CD4-positive, alpha-beta memory T cell (primary cell): ENCODE measurements at regions of chr17 and their contacts with region 1.

Region 1: DNA sequence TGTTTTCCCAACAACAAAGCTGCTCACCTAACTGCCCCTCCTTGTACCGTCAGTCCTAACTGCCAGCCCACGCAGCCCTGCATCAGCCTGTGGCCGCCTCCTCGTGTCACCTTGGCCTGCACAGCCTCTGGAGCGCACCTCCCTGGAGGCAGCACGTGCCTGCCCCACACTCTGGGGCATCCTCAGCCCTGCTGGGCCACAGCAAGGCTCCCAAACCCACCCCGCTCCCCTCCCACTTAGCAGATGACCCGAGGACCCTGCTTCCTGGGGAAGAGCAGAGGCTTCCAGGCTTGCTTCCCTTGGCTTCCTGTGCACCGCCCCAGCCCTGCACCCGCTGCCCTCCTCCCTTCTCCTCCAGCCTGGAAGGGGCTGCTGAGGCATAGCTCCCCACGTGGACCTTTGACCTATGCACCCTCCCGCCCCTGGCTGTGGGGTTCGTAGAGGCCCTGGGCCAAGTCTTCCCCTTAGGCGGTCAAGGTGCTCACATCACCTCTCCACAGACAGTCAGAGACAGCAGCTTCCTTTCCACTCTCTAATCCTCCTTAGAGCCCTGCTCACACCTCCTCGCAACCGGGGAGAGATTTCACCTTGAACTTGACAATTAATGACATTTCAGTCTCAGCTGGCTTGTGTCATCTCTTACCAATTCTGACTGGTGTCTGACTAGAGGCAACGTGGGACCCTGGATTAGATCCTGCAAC is 115.0 kb downstream of the MGAT5B start:
- DNase-seq: no peak
- H3K4me3 ChIP-seq: no peak overlapping the region
- H3K4me3 Mint-ChIP-seq: peak overlapping the region in 7 of 8 donors; percentile 21 to 77 (median 64)
- H3K27ac ChIP-seq: peak overlapping the region; percentile 44
- H3K27ac Mint-ChIP-seq: peak overlapping the region; percentile 64 to 95 (median 91)
- H3K4me1 ChIP-seq: peaks cover 27% of the 10 kb centered on the region
- H3K4me1 Mint-ChIP-seq: peaks cover 11 to 41% (median 19%) of the 10 kb centered on the region in 4 donors
- H3K27me3 ChIP-seq: no peaks in the 10 kb centered on the region
- H3K27me3 Mint-ChIP-seq: no peaks in the 10 kb centered on the region

Region 2: DNA sequence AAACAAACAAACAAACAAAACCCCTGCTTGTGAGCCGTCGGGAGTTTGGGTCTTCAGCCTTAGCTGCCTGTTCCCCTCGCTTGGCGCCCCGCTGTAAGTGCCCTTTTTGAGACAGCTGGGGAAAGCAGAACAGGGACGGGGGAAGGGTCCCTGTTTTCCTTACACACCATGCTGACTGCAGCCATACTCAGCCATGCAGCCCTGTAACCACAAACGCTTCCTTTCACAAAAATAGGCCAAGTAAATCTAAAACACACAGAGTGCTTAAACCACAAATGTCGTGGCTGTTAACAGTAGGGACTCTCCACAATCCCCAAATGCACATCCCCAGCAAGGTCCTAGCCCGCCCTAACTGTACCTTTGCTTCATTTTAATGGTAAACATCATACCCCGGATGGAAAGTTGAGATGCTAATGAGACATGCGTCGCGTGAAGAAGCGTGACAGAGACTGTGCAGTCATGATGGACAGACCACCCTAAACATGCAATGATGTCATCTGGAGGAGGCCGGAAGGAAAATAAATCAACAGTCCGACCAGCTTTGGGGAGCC is 14.8 kb after region 1 on chr17:
- CTCF ChIA-PET with region 1: interaction called, 4 read pairs
- POLR2A ChIA-PET with region 1: interaction called, 62 read pairs
- intact Hi-C with region 1: loop called (anchors 1 kb)
- DNase-seq: peak; percentile 82 to 90 (median 86)
- H3K4me3 ChIP-seq: peak overlapping the region; percentile 5 to 22
- H3K4me3 Mint-ChIP-seq: peak overlapping the region; percentile 52 to 80 (median 68)
- H3K27ac ChIP-seq: peak overlapping the region; percentile 79
- H3K27ac Mint-ChIP-seq: peak overlapping the region; percentile 87 to 96 (median 93)
- H3K4me1 ChIP-seq: peaks cover 55% of the 10 kb centered on the region
- H3K4me1 Mint-ChIP-seq: peaks cover 33 to 70% (median 50%) of the 10 kb centered on the region in 4 donors
- H3K27me3 ChIP-seq: no peaks in the 10 kb centered on the region
- H3K27me3 Mint-ChIP-seq: no peaks in the 10 kb centered on the region